Left cardiac atrium (tissue), 4 donors: ENCODE measurements at regions of chr3 and their contacts with region 1.

Region 1: GRCh38 chr3:69451594-69451993 is 65.7 kb upstream of the FRMD4B start:
- DNase-seq: no peak
- ATAC-seq: peak; percentile 19 to 39

Region 2: DNA sequence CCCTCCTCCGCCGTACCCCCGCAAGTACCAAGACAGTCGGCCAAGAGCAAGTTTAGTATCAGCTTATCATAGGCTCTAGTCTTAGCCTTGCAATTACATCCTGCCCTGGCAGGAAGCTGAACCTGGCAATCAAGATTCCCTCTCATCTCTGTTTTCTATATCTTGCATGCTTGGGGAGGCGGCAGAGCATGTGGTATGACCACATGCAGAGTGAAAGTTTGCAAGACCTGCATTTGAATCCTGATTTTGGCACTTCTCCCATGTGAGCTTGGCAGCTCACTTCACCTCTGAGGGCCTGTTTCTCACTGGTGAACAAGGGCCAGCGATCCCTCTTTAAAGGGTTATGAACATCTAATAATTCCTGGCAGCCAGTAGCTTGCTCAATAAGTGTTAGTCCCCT is 40.4 kb after region 1 on chr3:
- intact Hi-C with region 1: loop called in 1 of 2 experiments (anchors 5 kb)
- DNase-seq: no peak
- ATAC-seq: peak; percentile 17 to 47